PC-9 (cell line): ENCODE measurements at regions of chr19 and their contacts with region 1.

Region 1: GRCh38 chr19:39846176-39846677 is at the start of gene FBL:
- DNase-seq: peak; percentile 71 to 96
- H3K4me3 ChIP-seq: peak within 1 kb of the TSS; percentile 96
- H3K27ac ChIP-seq: no peak within 1 kb of the TSS
- H3K4me1 ChIP-seq: peaks cover 23% of the 10 kb centered on the region
- H3K27me3 ChIP-seq: no peaks in the 10 kb centered on the region
- CTCF ChIP-seq: no peak
- total RNA-seq, gene FBL: 437 and 498 TPM in 2 replicates

Region 2: GRCh38 chr19:39557441-39558151 is 288.6 kb before region 1 on chr19:
- CTCF ChIA-PET with region 1: no interaction called
- POLR2A ChIA-PET with region 1: no interaction called
- intact Hi-C with region 1: loop called (anchors 5 kb)
- DNase-seq: peak; percentile 44 to 75
- H3K4me3 ChIP-seq: no peak overlapping the region
- H3K27ac ChIP-seq: no peak overlapping the region
- H3K4me1 ChIP-seq: peaks cover 10% of the 10 kb centered on the region; the same call in 1 of the 2 replicates
- H3K27me3 ChIP-seq: peaks cover 34% of the 10 kb centered on the region
- CTCF ChIP-seq: no peak

Region 3: DNA sequence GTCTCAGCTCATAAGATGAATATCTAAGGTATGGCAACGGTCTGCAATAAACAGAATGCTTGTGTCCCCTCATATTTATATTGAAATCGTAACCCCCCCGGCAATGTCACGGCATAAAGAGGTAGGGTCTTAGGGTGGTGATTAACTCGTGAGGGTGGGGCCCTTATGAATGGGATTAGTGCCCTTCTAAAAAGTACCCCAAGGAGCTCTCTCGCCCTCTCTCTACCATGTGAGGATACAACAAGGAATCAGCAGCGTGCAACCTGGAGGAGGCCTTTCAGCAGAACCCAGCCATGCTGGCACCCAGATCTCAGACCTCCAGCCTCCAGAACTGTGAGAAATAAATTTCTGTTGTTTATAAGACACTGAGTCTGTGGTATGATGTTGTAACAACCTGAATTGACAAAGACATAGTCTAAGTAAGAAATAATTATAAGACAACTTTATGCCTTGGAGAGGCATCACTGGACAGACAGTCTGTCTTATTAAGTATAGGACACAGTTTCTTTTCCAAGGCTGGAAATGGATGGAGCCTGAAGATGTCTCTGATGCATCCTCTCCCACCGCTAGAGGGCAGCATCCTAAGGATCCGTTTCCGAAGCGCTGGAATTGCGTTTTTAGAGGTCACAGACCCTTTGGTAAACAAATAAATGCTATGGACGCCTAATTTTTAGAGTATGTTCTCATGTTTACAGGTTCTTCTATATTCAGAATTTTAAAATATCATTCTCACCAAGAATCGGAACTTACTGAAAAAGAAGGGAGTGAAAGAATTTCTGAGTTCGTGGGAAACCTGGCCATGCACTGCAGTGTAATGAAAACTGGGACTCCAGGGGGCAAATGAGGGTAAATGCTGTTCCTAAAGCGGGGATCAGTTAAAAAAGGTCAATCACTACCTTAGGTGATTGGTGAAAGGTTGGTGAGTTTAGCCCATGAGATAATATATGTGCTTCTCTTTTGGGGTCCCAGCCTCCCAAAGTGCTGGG is 80.8 kb before region 1 on chr19:
- CTCF ChIA-PET with region 1: interaction called, 17 read pairs
- POLR2A ChIA-PET with region 1: no interaction called
- intact Hi-C with region 1: no loop called
- DNase-seq: peak in 1 of 2 experiments; percentile 21
- H3K4me3 ChIP-seq: no peak overlapping the region
- H3K27ac ChIP-seq: no peak overlapping the region
- H3K4me1 ChIP-seq: no peaks in the 10 kb centered on the region
- H3K27me3 ChIP-seq: peaks cover 48% of the 10 kb centered on the region
- CTCF ChIP-seq: peak; percentile 87

Region 4: GRCh38 chr19:39805104-39805503 is 41.1 kb before region 1 on chr19:
- CTCF ChIA-PET with region 1: no interaction called
- POLR2A ChIA-PET with region 1: interaction called, 14 read pairs
- intact Hi-C with region 1: no loop called
- DNase-seq: no peak
- H3K4me3 ChIP-seq: no peak overlapping the region
- H3K27ac ChIP-seq: no peak overlapping the region
- H3K4me1 ChIP-seq: 0 out of 2 replicates have a peak, but pooled peaks cover 7% of the 10 kb centered on the region
- H3K27me3 ChIP-seq: peaks cover 6% of the 10 kb centered on the region; the same call in 1 of the 2 replicates
- CTCF ChIP-seq: no peak

Region 5: DNA sequence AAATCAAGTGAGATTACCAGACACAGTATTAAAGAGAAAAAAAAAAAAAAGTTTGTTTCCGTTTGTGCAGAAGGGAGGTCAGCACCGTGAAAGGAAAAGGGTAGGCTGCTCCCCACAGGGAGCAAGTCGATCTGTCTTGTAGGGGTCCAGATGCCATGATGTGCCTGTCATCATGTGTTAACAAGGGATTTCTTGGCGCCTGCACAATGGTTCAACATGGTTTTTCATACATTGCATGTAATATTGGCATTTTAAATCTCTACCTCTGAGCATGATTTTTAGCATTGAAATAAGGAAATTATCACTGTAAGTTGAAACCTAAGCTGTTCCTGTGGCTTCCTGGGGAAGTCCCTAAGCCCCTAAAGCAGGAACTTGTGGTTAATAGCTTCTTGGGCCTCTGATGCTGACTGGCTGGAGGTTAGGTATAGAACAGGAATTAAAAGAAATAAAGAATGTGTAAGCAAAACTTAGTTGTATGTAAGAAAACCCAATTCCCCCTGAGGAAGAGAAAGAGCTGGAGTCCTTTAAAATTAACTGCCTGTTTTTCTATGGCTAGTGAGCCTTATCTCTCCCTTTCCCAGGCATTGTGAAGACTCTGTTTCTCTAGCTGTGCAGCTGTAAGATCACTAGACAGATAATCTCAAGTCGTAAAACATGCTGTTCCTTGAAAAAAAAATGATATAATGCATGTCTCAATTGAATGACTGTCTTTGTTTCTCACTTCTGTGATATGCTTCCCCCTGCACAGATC is 95.6 kb after region 1 on chr19:
- CTCF ChIA-PET with region 1: no interaction called
- POLR2A ChIA-PET with region 1: no interaction called
- intact Hi-C with region 1: no loop called
- DNase-seq: peak in 1 of 2 experiments; percentile 56
- H3K4me3 ChIP-seq: no peak overlapping the region
- H3K27ac ChIP-seq: peak overlapping the region; percentile 19; the same call in 1 of the 2 replicates
- H3K4me1 ChIP-seq: peaks cover 32% of the 10 kb centered on the region
- H3K27me3 ChIP-seq: no peaks in the 10 kb centered on the region
- CTCF ChIP-seq: no peak

Region 6: DNA sequence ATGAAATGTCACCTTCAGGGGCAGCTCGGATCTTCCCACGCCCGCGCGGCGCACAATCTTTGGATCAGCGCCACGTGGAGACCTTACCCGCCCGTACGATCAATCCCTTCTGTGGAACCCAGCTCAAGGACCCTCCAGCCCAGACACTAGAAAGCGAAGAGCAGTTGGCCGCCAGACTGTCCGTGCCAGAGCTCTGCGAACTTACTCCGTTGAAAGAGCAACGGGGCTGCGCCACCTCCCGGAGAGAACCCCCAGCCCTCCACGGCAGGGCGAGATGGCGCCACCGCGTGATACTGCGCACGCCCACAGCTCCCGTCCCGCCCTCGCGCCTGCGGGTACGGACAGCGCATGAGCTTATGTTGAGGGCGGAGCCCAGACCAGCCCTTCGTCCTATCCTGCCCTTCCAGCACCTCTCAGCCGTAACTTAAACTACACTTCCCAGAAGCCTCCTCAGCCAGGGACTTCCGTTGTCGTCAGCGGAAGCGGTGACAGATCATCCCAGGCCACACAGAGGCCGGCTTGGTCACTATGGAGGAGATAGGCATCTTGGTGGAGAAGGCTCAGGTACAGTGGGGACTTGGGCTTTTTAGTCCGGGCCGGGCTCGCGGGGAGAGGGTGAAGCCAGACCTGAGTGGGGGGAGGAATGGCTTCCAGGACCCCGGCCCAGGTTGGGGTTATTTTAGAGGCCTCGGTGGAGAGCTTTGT is 124.6 kb after region 1 on chr19 and contains the start of gene PSMC4:
- CTCF ChIA-PET with region 1: interaction called, 5 read pairs
- POLR2A ChIA-PET with region 1: interaction called, 6 read pairs
- intact Hi-C with region 1: loop called (anchors 1 kb)
- DNase-seq: peak; percentile 95 to 98
- H3K4me3 ChIP-seq: peak within 1 kb of the TSS; percentile 90
- H3K27ac ChIP-seq: peak within 1 kb of the TSS; percentile 71
- H3K4me1 ChIP-seq: peaks cover 18% of the 10 kb centered on the region
- H3K27me3 ChIP-seq: no peaks in the 10 kb centered on the region
- CTCF ChIP-seq: peak; percentile 63
- total RNA-seq, gene PSMC4: 82.8 and 110 TPM in 2 replicates